Activated CD4-positive, alpha-beta memory T cell treated with anti-CD3 and anti-CD28 coated beads for 36 hours (primary cell): ENCODE measurements at regions of chr1 and their contacts with region 1.

Region 1: GRCh38 chr1:15617175-15617880 is at the start of gene DDI2:
- DNase-seq: peak; percentile 96
- H3K4me3 Mint-ChIP-seq: peak within 1 kb of the TSS; percentile 95
- H3K27ac Mint-ChIP-seq: peak within 1 kb of the TSS; percentile 93
- H3K4me1 Mint-ChIP-seq: peaks cover 33% of the 10 kb centered on the region
- H3K27me3 Mint-ChIP-seq: no peaks in the 10 kb centered on the region
- total RNA-seq, gene DDI2: 26.3 to 28.2 TPM

Region 2: DNA sequence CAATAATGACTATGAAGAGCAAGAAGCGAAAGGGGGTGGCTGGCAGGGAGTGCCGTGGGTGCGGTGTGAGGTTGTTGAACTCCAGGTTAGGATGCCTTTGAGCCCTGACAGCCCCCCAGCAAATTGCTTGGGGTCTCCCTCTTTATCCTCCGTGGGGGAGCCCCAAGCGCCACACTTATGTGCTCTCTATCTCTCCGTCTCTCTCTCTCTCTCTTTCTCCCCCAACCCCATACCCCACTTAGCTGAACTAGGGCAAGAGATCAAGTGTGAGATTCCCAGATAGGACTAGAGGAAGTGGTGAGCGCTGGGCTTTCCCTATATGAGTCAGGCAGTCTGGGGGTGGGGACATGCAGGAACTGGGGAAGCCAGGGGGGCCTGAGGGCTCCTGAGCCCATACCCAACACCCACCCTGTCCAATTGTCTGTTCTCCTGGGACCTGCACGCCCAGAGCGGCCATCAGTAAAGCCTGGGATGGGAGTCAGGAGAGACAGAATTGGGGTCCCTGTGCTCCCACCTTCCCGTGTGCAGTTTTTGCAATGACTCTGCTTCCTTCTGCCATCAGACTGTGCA is 199.9 kb before region 1 on chr1:
- CTCF ChIA-PET with region 1: no interaction called
- POLR2A ChIA-PET with region 1: no interaction called
- intact Hi-C with region 1: loop called (anchors 5 kb)
- DNase-seq: peak; percentile 73
- H3K4me3 Mint-ChIP-seq: peak overlapping the region; percentile 35
- H3K27ac Mint-ChIP-seq: peak overlapping the region; percentile 71
- H3K4me1 Mint-ChIP-seq: peaks cover 58% of the 10 kb centered on the region
- H3K27me3 Mint-ChIP-seq: no peaks in the 10 kb centered on the region

Region 3: GRCh38 chr1:15603050-15603965 is 14.0 kb before region 1 on chr1:
- CTCF ChIA-PET with region 1: no interaction called
- POLR2A ChIA-PET with region 1: interaction called, 9 read pairs
- intact Hi-C with region 1: loop called (anchors 1 kb)
- DNase-seq: peak; percentile 95
- H3K4me3 Mint-ChIP-seq: peak overlapping the region; percentile 73
- H3K27ac Mint-ChIP-seq: no peak overlapping the region
- H3K4me1 Mint-ChIP-seq: peaks cover 11% of the 10 kb centered on the region
- H3K27me3 Mint-ChIP-seq: no peaks in the 10 kb centered on the region

Region 4: GRCh38 chr1:15696956-15697521 is 79.7 kb after region 1 on chr1:
- CTCF ChIA-PET with region 1: no interaction called
- POLR2A ChIA-PET with region 1: no interaction called
- intact Hi-C with region 1: loop called (anchors 5 kb)
- DNase-seq: peak; percentile 65
- H3K4me3 Mint-ChIP-seq: peak overlapping the region; percentile 64
- H3K27ac Mint-ChIP-seq: peak overlapping the region; percentile 91
- H3K4me1 Mint-ChIP-seq: peaks cover 24% of the 10 kb centered on the region
- H3K27me3 Mint-ChIP-seq: no peaks in the 10 kb centered on the region

Region 5: GRCh38 chr1:15966081-15966955 is 349.0 kb after region 1 on chr1:
- CTCF ChIA-PET with region 1: no interaction called
- POLR2A ChIA-PET with region 1: no interaction called
- intact Hi-C with region 1: loop called (anchors 5 kb)
- DNase-seq: peak; percentile 94
- H3K4me3 Mint-ChIP-seq: peak overlapping the region; percentile 74
- H3K27ac Mint-ChIP-seq: peak overlapping the region; percentile 100
- H3K4me1 Mint-ChIP-seq: peaks cover 81% of the 10 kb centered on the region
- H3K27me3 Mint-ChIP-seq: no peaks in the 10 kb centered on the region